ENCODE measurements at regions of chr5 and their contacts with region 1.

Region 1: GRCh38 chr5:77086689-77087483 is at the start of gene ZBED3:
- DNase-seq: peak; percentile 64
- ATAC-seq: peak; percentile 78
- H3K4me3 ChIP-seq: peak within 1 kb of the TSS; percentile 93
- H3K27ac ChIP-seq: peak within 1 kb of the TSS; percentile 77
- H3K4me1 ChIP-seq: peaks cover 24% of the 10 kb centered on the region
- H3K27me3 ChIP-seq: no peaks in the 10 kb centered on the region
- CTCF ChIP-seq: 0 out of 2 replicates have a peak, but pooled peaks have one; percentile 12
- total RNA-seq, gene ZBED3: 1.3 and 9.8 TPM in 2 replicates

Region 2: DNA sequence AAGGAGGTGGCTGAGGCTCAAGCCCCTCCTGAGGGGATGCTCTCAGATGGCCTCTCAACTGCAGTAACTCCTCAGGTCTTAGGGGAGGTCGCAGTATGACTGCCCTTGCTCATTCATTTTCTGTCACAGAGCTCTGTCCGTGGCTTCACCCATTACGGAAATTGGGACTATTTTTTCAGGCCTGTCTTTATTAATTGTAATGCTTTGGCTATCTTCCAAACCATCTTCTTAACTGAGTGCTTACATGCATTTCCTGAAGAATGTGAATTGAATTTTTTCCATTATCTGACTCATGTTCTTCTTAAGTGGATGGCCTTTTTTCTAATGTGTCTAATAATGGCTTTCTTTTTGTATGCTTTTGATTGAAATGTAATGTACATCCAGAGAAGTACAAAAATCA is 1040.1 kb before region 1 on chr5:
- CTCF ChIA-PET with region 1: no interaction called
- POLR2A ChIA-PET with region 1: no interaction called
- intact Hi-C with region 1: no loop called
- DNase-seq: no peak
- ATAC-seq: no peak
- H3K4me3 ChIP-seq: no peak overlapping the region
- H3K27ac ChIP-seq: no peak overlapping the region
- H3K4me1 ChIP-seq: no peaks in the 10 kb centered on the region
- H3K27me3 ChIP-seq: no peaks in the 10 kb centered on the region
- CTCF ChIP-seq: no peak

Region 3: GRCh38 chr5:77030097-77031071 is 56.5 kb before region 1 on chr5 and contains the start of gene AGGF1:
- CTCF ChIA-PET with region 1: no interaction called
- POLR2A ChIA-PET with region 1: interaction called, 11 read pairs
- intact Hi-C with region 1: loop called (anchors 5 kb)
- DNase-seq: peak; percentile 90
- ATAC-seq: peak; percentile 96
- H3K4me3 ChIP-seq: peak within 1 kb of the TSS; percentile 92
- H3K27ac ChIP-seq: peak within 1 kb of the TSS; percentile 67
- H3K4me1 ChIP-seq: no peaks in the 10 kb centered on the region
- H3K27me3 ChIP-seq: no peaks in the 10 kb centered on the region
- CTCF ChIP-seq: no peak
- total RNA-seq, gene AGGF1: 14.4 and 21.0 TPM in 2 replicates

Region 4: GRCh38 chr5:78717674-78718625 is 1631.1 kb after region 1 on chr5:
- CTCF ChIA-PET with region 1: no interaction called
- POLR2A ChIA-PET with region 1: no interaction called
- intact Hi-C with region 1: no loop called
- DNase-seq: no peak
- ATAC-seq: no peak
- H3K4me3 ChIP-seq: no peak overlapping the region
- H3K27ac ChIP-seq: no peak overlapping the region
- H3K4me1 ChIP-seq: peaks cover 15% of the 10 kb centered on the region
- H3K27me3 ChIP-seq: no peaks in the 10 kb centered on the region
- CTCF ChIP-seq: no peak

Measured in PC-3 (cell line).